Stomach (tissue), 19 donors: ENCODE measurements at regions of chr17 and their contacts with region 1.

Region 1: DNA sequence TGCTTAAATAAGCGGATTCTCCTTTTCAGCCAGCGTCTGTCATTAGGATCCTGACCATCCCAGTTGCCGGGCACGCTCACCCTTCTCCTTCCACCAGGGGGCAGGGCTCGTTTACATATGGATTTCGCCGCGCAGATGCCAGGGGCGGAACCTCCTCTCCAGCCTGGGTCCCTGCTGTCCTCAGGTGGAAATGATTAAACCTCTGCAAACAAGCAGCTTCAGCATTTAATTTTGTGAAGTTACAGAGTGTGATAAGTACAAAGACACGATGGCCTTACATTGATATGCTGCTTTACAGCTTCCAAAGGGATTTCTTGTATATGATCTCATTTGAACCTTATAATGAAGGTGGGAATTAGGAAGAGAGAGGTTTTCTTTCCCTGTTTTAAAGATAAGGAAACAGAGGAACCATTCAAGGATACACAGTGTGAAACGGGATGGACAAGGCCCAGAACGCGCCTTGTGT is 3.9 kb upstream of the KRT28 start:
- DNase-seq: peak; percentile 86 to 90
- H3K4me3 ChIP-seq: no peak overlapping the region
- H3K27ac ChIP-seq: no peak overlapping the region
- H3K4me1 ChIP-seq: peaks cover 0 to 6% (median 2%) of the 10 kb centered on the region in 4 donors
- H3K27me3 ChIP-seq: peaks cover 0 to 85% (median 34%) of the 10 kb centered on the region in 3 donors
- CTCF ChIP-seq: peak in 5 of 7 experiments; percentile 66 to 89 (median 79)
- EP300 ChIP-seq: no peak
- POLR2A ChIP-seq: no peak

Region 2: GRCh38 chr17:40588552-40588951 is 215.1 kb before region 1 on chr17:
- intact Hi-C with region 1: no loop called
- DNase-seq: no peak
- H3K4me3 ChIP-seq: no peak overlapping the region
- H3K27ac ChIP-seq: no peak overlapping the region
- H3K4me1 ChIP-seq: no peaks in the 10 kb centered on the region
- H3K27me3 ChIP-seq: no peaks in the 10 kb centered on the region
- CTCF ChIP-seq: no peak
- EP300 ChIP-seq: no peak
- POLR2A ChIP-seq: no peak

Region 3: GRCh38 chr17:41665566-41666236 is 862.1 kb after region 1 on chr17:
- intact Hi-C with region 1: loop called (anchors 10 kb)
- DNase-seq: peak; percentile 93 to 97
- H3K4me3 ChIP-seq: peak overlapping the region; percentile 49 to 54 (median 51)
- H3K27ac ChIP-seq: peak overlapping the region; percentile 78 to 88 (median 86)
- H3K4me1 ChIP-seq: peaks cover 22 to 41% (median 25%) of the 10 kb centered on the region in 4 donors
- H3K27me3 ChIP-seq: no peaks in the 10 kb centered on the region
- CTCF ChIP-seq: peak in 6 of 7 experiments; percentile 18 to 96 (median 92)
- EP300 ChIP-seq: no peak
- POLR2A ChIP-seq: no peak